B cell (primary cell): ENCODE measurements at regions of chr22 and their contacts with region 1.

Region 1: GRCh38 chr22:39388261-39389011 is 11.1 kb upstream of the TAB1 start:
- DNase-seq: peak; percentile 91
- ATAC-seq: peak; percentile 88
- H3K4me3 ChIP-seq: peak overlapping the region in 4 of 5 experiments; percentile 61 to 76 (median 69)
- H3K4me3 Mint-ChIP-seq: peak overlapping the region; percentile 90
- H3K27ac ChIP-seq: peak overlapping the region; percentile 68 to 70
- H3K27ac Mint-ChIP-seq: peak overlapping the region; percentile 91
- H3K4me1 ChIP-seq: peaks cover 0 to 14% of the 10 kb centered on the region in 2 donors
- H3K4me1 Mint-ChIP-seq: peaks cover 10% of the 10 kb centered on the region
- H3K27me3 ChIP-seq: no peaks in the 10 kb centered on the region
- H3K27me3 Mint-ChIP-seq: no peaks in the 10 kb centered on the region
- CTCF ChIP-seq: peak; percentile 22

Region 2: DNA sequence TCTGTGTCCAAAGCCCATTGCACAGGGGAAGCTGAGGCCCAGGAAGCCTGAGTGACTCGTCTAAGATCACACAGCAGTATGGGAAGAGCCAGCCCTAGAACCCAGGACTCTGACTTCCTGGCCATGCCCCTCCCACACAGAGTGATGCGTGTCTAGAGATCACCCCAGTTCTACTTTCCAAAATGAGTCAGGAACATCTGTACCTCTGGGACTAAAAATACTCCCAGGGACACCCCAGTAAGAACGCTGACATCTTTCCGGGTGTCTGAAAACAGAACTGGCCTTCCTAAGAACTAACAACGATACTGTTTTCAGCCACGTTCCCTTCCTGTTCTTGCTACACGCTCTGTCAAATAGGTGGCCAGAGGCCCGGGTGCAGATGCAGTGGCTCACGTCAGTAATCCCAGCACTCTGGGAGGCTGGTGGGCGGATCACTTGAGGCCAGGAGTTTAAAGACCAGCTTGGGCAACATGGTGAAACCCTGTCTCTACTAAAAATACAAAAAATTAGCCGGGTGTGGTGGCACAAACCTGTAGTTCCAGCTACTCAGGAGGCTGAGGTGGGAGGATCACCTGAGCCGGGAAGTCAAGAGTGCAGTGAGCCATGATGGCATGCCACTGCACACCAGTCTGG is 121.9 kb before region 1 on chr22:
- CTCF ChIA-PET with region 1: no interaction called
- POLR2A ChIA-PET with region 1: no interaction called
- intact Hi-C with region 1: no loop called
- DNase-seq: no peak
- ATAC-seq: peak; percentile 21
- H3K4me3 ChIP-seq: no peak overlapping the region
- H3K4me3 Mint-ChIP-seq: no peak overlapping the region
- H3K27ac ChIP-seq: no peak overlapping the region
- H3K27ac Mint-ChIP-seq: no peak overlapping the region
- H3K4me1 ChIP-seq: peaks cover 0 to 6% of the 10 kb centered on the region in 2 donors
- H3K4me1 Mint-ChIP-seq: peaks cover 5% of the 10 kb centered on the region
- H3K27me3 ChIP-seq: peaks cover 0 to 16% (median 0%) of the 10 kb centered on the region in 4 experiments
- H3K27me3 Mint-ChIP-seq: peaks cover 16% of the 10 kb centered on the region
- CTCF ChIP-seq: no peak

Region 3: DNA sequence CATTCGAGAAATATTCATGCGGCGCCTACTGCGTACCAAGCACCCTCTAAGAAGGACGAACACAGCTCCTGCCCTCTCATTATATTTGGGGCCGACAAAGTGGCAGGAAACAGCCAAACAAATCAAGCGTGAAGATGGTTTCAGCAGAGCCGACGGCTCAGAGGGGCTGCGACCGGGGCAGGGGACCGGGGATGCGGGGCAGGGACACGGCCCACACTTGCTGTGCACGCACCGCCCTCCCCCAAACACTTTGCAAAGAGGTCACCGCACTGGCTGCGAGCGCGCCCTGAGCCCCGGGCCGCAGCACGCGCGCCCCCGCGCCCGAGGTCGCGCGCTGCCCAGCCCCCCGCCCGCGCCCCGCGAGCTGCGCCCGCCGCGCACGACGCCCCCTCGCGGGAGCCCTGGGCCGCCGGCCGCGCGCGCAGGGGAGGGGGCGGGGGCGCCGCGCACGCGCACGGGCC is 38.9 kb before region 1 on chr22:
- CTCF ChIA-PET with region 1: interaction called, 9 read pairs
- POLR2A ChIA-PET with region 1: interaction called, 7 read pairs
- intact Hi-C with region 1: loop called (anchors 1 kb)
- DNase-seq: peak; percentile 73
- ATAC-seq: peak; percentile 21
- H3K4me3 ChIP-seq: peak overlapping the region; percentile 66 to 83 (median 69)
- H3K4me3 Mint-ChIP-seq: peak overlapping the region; percentile 95
- H3K27ac ChIP-seq: peak overlapping the region; percentile 4 to 45
- H3K27ac Mint-ChIP-seq: peak overlapping the region; percentile 94
- H3K4me1 ChIP-seq: peaks cover 31 to 37% of the 10 kb centered on the region in 2 donors
- H3K4me1 Mint-ChIP-seq: peaks cover 35% of the 10 kb centered on the region
- H3K27me3 ChIP-seq: no peaks in the 10 kb centered on the region
- H3K27me3 Mint-ChIP-seq: no peaks in the 10 kb centered on the region
- CTCF ChIP-seq: no peak

Region 4: GRCh38 chr22:39414886-39415285 is 26.4 kb after region 1 on chr22:
- CTCF ChIA-PET with region 1: no interaction called
- POLR2A ChIA-PET with region 1: no interaction called
- intact Hi-C with region 1: no loop called
- DNase-seq: no peak
- ATAC-seq: no peak
- H3K4me3 ChIP-seq: no peak overlapping the region
- H3K4me3 Mint-ChIP-seq: no peak overlapping the region
- H3K27ac ChIP-seq: no peak overlapping the region
- H3K27ac Mint-ChIP-seq: no peak overlapping the region
- H3K4me1 ChIP-seq: peaks cover 8 to 16% of the 10 kb centered on the region in 2 donors
- H3K4me1 Mint-ChIP-seq: peaks cover 18% of the 10 kb centered on the region
- H3K27me3 ChIP-seq: no peaks in the 10 kb centered on the region
- H3K27me3 Mint-ChIP-seq: no peaks in the 10 kb centered on the region
- CTCF ChIP-seq: no peak